GM23248 (cell line): ENCODE measurements at regions of chr4 and their contacts with region 1.

Region 1: DNA sequence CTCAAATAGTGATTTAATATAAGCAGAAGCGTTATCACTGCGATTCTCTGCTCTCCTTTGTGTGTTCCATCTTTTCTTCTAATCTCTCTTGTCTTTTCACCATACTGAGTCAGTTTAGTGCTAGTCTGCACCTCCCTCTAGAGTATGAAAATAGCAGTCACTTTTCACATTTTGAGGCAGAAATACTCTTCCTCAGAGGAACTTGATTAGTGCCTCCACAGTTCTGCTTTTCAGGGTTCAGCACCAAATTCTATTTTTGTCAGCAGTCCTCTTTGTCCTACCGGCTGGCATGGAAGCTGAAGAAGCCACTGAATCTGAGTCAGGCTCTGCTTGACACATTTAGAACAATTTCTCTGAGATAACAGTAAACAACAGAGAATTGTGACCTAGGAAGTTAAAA is 49.7 kb upstream of the ANKRD17 start:
- DNase-seq: peak; percentile 53
- H3K4me3 ChIP-seq: no peak overlapping the region
- H3K27ac ChIP-seq: peak overlapping the region; percentile 24
- H3K4me1 ChIP-seq: peaks cover 20% of the 10 kb centered on the region
- H3K27me3 ChIP-seq: no peaks in the 10 kb centered on the region

Region 2: GRCh38 chr4:73944061-73944875 is 636.0 kb after region 1 on chr4:
- in situ Hi-C with region 1: loop called (anchors 25 kb)
- DNase-seq: peak; percentile 58
- H3K4me3 ChIP-seq: peak overlapping the region; percentile 67
- H3K27ac ChIP-seq: no peak overlapping the region
- H3K4me1 ChIP-seq: no peaks in the 10 kb centered on the region
- H3K27me3 ChIP-seq: peaks cover 16% of the 10 kb centered on the region; the same call in 1 of the 2 replicates

Region 3: GRCh38 chr4:74133786-74134499 is 825.7 kb after region 1 on chr4:
- in situ Hi-C with region 1: loop called (anchors 25 kb)
- DNase-seq: peak; percentile 95
- H3K4me3 ChIP-seq: no peak overlapping the region
- H3K27ac ChIP-seq: peak overlapping the region; percentile 20; the same call in 1 of the 2 replicates
- H3K4me1 ChIP-seq: 0 out of 2 replicates have a peak, but pooled peaks cover 8% of the 10 kb centered on the region
- H3K27me3 ChIP-seq: no peaks in the 10 kb centered on the region